Mammary epithelial cell (primary cell): ENCODE measurements at regions of chr1 and their contacts with region 1.

Region 1: GRCh38 chr1:20137043-20137442 is 2.1 kb upstream of the PLA2G2F start:
- DNase-seq: peak; percentile 46
- H3K4me3 ChIP-seq: no peak overlapping the region
- H3K27ac ChIP-seq: no peak overlapping the region
- H3K4me1 ChIP-seq: no peaks in the 10 kb centered on the region
- H3K27me3 ChIP-seq: no peaks in the 10 kb centered on the region
- CTCF ChIP-seq: no peak

Region 2: GRCh38 chr1:20188455-20188817 is 51.4 kb after region 1 on chr1:
- CTCF ChIA-PET with region 1: interaction called, 14 read pairs
- dilution Hi-C with region 1: no loop called
- in situ Hi-C with region 1: no loop called
- intact Hi-C with region 1: no loop called
- DNase-seq: no peak
- H3K4me3 ChIP-seq: no peak overlapping the region
- H3K27ac ChIP-seq: no peak overlapping the region
- H3K4me1 ChIP-seq: peaks cover 14% of the 10 kb centered on the region
- H3K27me3 ChIP-seq: no peaks in the 10 kb centered on the region
- CTCF ChIP-seq: no peak